ENCODE measurements at regions of chr2 and their contacts with region 1.

Region 1: DNA sequence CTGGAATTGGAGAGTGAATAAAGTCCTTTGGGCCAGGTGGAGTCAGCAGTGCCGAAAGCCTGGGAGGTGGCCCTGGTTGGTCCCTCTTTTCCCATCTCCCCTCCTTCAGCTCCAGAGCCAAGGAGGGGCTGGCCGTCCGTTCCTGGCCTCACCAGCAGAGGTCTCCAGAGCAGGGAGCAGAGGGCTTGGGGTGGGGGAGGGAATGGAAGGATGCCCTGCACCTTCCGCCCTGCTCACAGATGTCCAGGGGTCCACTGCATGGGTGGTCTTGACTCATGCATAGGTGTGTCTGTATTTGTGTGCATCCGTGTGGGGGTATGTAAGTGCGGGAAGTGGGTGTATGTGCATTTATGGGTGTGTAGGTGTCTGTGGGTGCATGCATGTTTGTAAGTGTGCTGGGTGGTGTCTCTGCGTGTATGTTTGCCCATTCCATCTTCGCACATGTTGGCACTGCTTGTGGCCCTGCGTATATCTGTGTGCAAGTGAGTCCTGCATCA is 201.8 kb downstream of the ZFP36L2 start:
- DNase-seq: peak; percentile 86
- H3K4me3 Mint-ChIP-seq: no peak overlapping the region
- H3K27ac Mint-ChIP-seq: peak overlapping the region; percentile 62
- H3K4me1 Mint-ChIP-seq: peaks cover 56% of the 10 kb centered on the region
- H3K27me3 Mint-ChIP-seq: no peaks in the 10 kb centered on the region
- CTCF ChIP-seq: peak; percentile 86

Region 2: DNA sequence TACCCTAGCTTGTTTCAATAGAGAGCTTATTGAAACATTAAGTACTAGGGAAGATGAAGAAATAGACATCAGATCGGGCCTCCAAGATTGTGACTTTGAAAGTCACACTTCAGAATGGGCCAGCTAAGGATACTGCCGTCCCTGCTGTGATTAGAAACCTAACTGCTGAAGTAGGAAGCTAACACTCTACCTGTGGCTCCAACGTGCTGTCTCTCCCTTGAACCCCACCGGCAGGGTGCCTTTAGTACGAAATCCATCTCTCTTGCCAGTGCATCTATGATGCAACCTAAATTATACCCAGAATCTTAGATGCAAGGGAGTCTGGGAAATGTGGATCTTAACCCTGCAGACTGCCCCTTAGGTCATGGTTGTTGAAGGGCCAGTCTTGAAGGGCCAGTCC is 339.3 kb before region 1 on chr2:
- CTCF ChIA-PET with region 1: no interaction called
- intact Hi-C with region 1: no loop called
- DNase-seq: no peak
- H3K4me3 Mint-ChIP-seq: no peak overlapping the region
- H3K27ac Mint-ChIP-seq: no peak overlapping the region
- H3K4me1 Mint-ChIP-seq: no peaks in the 10 kb centered on the region
- H3K27me3 Mint-ChIP-seq: no peaks in the 10 kb centered on the region
- CTCF ChIP-seq: no peak

Region 3: GRCh38 chr2:42828487-42829425 is 195.8 kb before region 1 on chr2:
- CTCF ChIA-PET with region 1: interaction called, 5 read pairs
- intact Hi-C with region 1: loop called (anchors 2 kb)
- DNase-seq: peak; percentile 82
- H3K4me3 Mint-ChIP-seq: no peak overlapping the region
- H3K27ac Mint-ChIP-seq: no peak overlapping the region
- H3K4me1 Mint-ChIP-seq: peaks cover 27% of the 10 kb centered on the region
- H3K27me3 Mint-ChIP-seq: no peaks in the 10 kb centered on the region
- CTCF ChIP-seq: peak; percentile 90

Region 4: DNA sequence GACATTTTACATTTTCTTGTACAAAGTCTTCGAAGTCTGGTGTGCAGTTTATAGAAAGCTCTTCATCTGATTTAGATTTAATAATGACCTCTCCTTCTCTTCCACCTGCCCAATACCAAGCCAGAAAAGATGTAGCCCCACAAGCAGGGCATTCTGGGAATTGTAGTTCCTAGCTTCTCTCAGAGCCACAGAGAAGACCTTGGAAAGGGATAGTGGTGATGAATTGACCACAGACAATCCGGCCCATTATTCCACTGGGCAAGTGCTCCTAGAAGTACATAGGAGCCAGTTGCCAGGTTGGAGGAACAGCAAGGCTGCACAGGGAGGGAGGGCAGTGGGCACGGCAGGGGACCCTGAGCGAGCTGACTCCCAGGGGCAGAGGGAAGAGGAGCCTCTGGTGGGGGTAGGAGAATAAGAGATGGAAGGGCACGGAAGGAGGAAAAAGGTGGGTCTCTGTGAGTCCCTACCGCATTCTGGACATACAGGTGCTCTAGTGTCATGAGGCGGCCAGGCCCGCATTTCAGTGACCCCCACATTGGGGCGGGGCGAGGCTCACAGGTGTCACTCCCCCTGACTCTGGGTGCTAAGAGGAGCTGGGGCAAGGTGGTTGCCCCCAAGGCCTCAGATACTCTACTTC is 79.7 kb before region 1 on chr2:
- CTCF ChIA-PET with region 1: interaction called, 3 read pairs
- intact Hi-C with region 1: loop called (anchors 1 kb)
- DNase-seq: no peak
- H3K4me3 Mint-ChIP-seq: no peak overlapping the region
- H3K27ac Mint-ChIP-seq: no peak overlapping the region
- H3K4me1 Mint-ChIP-seq: peaks cover 29% of the 10 kb centered on the region
- H3K27me3 Mint-ChIP-seq: no peaks in the 10 kb centered on the region
- CTCF ChIP-seq: no peak

Region 5: DNA sequence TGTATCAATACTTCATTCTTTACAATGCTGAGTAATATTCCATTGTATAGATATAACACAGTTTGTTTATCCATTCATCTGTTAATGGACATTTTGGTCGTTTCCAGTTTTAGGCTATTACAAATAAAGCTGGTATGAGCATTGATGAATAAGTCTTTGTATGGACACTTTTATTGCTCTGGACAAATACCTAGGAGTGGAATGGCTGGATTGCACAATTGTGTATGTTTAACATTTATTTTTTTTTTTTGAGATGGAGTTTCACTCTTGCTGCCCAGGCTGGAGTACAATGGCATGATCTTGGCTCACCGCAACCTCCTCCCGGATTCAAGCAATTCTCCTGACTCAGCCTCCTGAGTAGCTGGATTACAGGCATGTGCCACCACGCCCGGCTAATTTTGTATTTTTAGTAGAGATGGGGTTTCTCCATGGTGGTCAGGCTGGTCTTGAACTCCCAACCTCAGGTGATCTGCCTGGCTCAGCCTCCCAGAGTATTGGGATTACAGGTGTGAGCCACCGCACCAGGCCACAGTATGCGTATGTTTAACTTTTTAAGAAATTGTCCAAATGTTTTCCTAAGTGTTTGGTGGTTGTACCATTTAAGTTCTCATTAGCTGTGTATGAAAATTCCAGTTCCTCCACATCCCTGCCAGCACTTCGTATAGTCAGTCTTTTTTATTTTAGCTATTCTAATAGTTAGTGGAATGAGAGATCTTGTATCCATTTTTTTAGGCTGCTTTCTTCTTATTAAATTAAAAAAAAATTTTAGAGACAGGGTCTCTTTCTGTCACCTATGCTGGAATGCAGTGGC is 37.2 kb before region 1 on chr2:
- CTCF ChIA-PET with region 1: interaction called, 18 read pairs
- intact Hi-C with region 1: no loop called
- DNase-seq: peak; percentile 70
- H3K4me3 Mint-ChIP-seq: no peak overlapping the region
- H3K27ac Mint-ChIP-seq: peak overlapping the region; percentile 93
- H3K4me1 Mint-ChIP-seq: peaks cover 48% of the 10 kb centered on the region
- H3K27me3 Mint-ChIP-seq: no peaks in the 10 kb centered on the region
- CTCF ChIP-seq: no peak

Region 6: GRCh38 chr2:43044093-43044681 is 19.6 kb after region 1 on chr2:
- CTCF ChIA-PET with region 1: no interaction called
- intact Hi-C with region 1: no loop called
- DNase-seq: no peak
- H3K4me3 Mint-ChIP-seq: no peak overlapping the region
- H3K27ac Mint-ChIP-seq: no peak overlapping the region
- H3K4me1 Mint-ChIP-seq: peaks cover 18% of the 10 kb centered on the region
- H3K27me3 Mint-ChIP-seq: no peaks in the 10 kb centered on the region
- CTCF ChIP-seq: no peak

Region 7: DNA sequence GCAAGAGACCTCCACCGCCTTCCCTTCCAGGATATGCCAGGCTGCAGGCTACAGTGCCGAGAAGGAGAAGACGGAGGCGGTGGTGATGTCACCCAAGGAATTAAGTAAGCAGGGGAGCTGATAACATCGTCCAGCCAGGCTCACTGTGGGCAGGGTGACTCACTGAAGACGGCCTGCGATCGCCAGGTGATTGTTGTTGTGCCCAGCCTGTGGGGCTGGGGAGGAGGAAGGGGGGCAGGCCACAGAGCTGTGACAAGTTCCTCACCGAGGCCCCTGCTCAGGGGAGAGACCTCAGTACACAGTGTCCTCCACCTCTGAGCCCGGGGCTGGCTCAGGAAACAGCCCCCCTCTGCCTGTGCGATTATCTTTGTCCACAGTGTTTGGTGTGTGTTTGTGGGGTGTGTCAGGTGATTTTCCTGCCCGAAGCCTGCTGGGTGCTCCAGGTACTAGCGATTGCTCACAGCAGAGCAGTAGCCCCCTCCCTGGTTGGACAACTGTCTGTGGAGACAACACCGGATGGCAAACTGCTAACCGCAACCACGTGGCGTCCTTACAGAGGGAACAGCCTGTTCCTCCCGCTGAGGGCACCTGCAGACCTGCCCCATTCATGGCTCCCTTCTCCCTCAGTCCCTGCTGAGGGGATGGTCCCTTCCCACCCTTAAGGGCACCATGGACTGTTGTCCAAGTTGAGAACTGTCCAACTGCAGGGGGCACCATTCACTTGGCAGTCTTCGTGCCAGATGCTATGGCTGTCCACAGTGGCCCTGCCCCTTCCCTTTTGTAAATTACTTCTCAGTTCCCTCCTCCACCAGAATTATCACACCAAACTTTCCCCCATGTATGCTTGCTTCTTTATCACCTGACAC is 106.7 kb after region 1 on chr2:
- CTCF ChIA-PET with region 1: no interaction called
- intact Hi-C with region 1: loop called (anchors 1 kb)
- DNase-seq: peak; percentile 84
- H3K4me3 Mint-ChIP-seq: no peak overlapping the region
- H3K27ac Mint-ChIP-seq: peak overlapping the region; percentile 62
- H3K4me1 Mint-ChIP-seq: peaks cover 44% of the 10 kb centered on the region
- H3K27me3 Mint-ChIP-seq: no peaks in the 10 kb centered on the region
- CTCF ChIP-seq: no peak

Region 8: GRCh38 chr2:43324259-43325106 is 299.9 kb after region 1 on chr2:
- CTCF ChIA-PET with region 1: no interaction called
- intact Hi-C with region 1: no loop called
- DNase-seq: no peak
- H3K4me3 Mint-ChIP-seq: no peak overlapping the region
- H3K27ac Mint-ChIP-seq: no peak overlapping the region
- H3K4me1 Mint-ChIP-seq: peaks cover 13% of the 10 kb centered on the region
- H3K27me3 Mint-ChIP-seq: no peaks in the 10 kb centered on the region
- CTCF ChIP-seq: no peak

Region 9: GRCh38 chr2:43484323-43484930 is 459.9 kb after region 1 on chr2:
- CTCF ChIA-PET with region 1: interaction called, 4 read pairs
- intact Hi-C with region 1: loop called (anchors 1 kb)
- DNase-seq: no peak
- H3K4me3 Mint-ChIP-seq: no peak overlapping the region
- H3K27ac Mint-ChIP-seq: no peak overlapping the region
- H3K4me1 Mint-ChIP-seq: peaks cover 26% of the 10 kb centered on the region
- H3K27me3 Mint-ChIP-seq: no peaks in the 10 kb centered on the region
- CTCF ChIP-seq: no peak